B cell (primary cell): ENCODE measurements at regions of chr5 and their contacts with region 1.

Region 1: GRCh38 chr5:54673523-54674225 is 156.1 kb downstream of the SNX18 start:
- DNase-seq: peak; percentile 74
- ATAC-seq: peak; percentile 91
- H3K4me3 ChIP-seq: no peak overlapping the region
- H3K4me3 Mint-ChIP-seq: peak overlapping the region; percentile 43
- H3K27ac ChIP-seq: peak overlapping the region; percentile 26 to 62
- H3K27ac Mint-ChIP-seq: peak overlapping the region; percentile 47
- H3K4me1 ChIP-seq: peaks cover 68 to 76% of the 10 kb centered on the region in 2 donors
- H3K4me1 Mint-ChIP-seq: peaks cover 75% of the 10 kb centered on the region
- H3K27me3 ChIP-seq: no peaks in the 10 kb centered on the region
- H3K27me3 Mint-ChIP-seq: no peaks in the 10 kb centered on the region
- CTCF ChIP-seq: no peak

Region 2: GRCh38 chr5:54646356-54647101 is 27.1 kb before region 1 on chr5:
- CTCF ChIA-PET with region 1: interaction called, 4 read pairs
- POLR2A ChIA-PET with region 1: interaction called, 6 read pairs
- intact Hi-C with region 1: loop called (anchors 1 kb)
- DNase-seq: peak; percentile 88
- ATAC-seq: peak; percentile 89
- H3K4me3 ChIP-seq: peak overlapping the region; percentile 7 to 49 (median 41)
- H3K4me3 Mint-ChIP-seq: peak overlapping the region; percentile 79
- H3K27ac ChIP-seq: peak overlapping the region; percentile 87 to 88
- H3K27ac Mint-ChIP-seq: peak overlapping the region; percentile 98
- H3K4me1 ChIP-seq: peaks cover 61 to 67% of the 10 kb centered on the region in 2 donors
- H3K4me1 Mint-ChIP-seq: peaks cover 68% of the 10 kb centered on the region
- H3K27me3 ChIP-seq: no peaks in the 10 kb centered on the region
- H3K27me3 Mint-ChIP-seq: no peaks in the 10 kb centered on the region
- CTCF ChIP-seq: no peak

Region 3: GRCh38 chr5:54738118-54738972 is 64.7 kb after region 1 on chr5:
- CTCF ChIA-PET with region 1: no interaction called
- POLR2A ChIA-PET with region 1: no interaction called
- intact Hi-C with region 1: no loop called
- DNase-seq: no peak
- ATAC-seq: no peak
- H3K4me3 ChIP-seq: no peak overlapping the region
- H3K4me3 Mint-ChIP-seq: no peak overlapping the region
- H3K27ac ChIP-seq: no peak overlapping the region
- H3K27ac Mint-ChIP-seq: no peak overlapping the region
- H3K4me1 ChIP-seq: peaks cover 7 to 14% of the 10 kb centered on the region in 2 donors
- H3K4me1 Mint-ChIP-seq: peaks cover 21% of the 10 kb centered on the region
- H3K27me3 ChIP-seq: peaks cover 0 to 2% (median 0%) of the 10 kb centered on the region in 4 experiments
- H3K27me3 Mint-ChIP-seq: no peaks in the 10 kb centered on the region
- CTCF ChIP-seq: no peak

Region 4: DNA sequence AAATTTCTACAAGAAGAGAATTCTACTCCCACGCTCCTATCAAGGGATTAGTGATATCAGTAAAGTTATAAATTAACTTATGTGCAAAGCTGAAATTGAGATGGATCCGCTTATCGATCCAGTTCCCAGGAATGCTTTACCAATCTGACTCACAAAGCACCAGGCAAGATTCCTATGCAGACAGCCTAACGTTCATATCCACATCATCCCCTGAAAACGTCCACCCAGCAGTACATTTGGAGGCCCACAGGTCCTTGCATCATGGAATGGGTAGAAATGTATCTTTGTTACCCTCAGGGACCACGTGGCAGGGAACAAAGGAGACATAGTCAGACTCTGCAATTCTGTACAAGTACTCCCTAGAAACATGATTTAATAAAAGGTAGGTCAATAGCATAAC is 164.3 kb after region 1 on chr5:
- CTCF ChIA-PET with region 1: no interaction called
- POLR2A ChIA-PET with region 1: no interaction called
- intact Hi-C with region 1: no loop called
- DNase-seq: no peak
- ATAC-seq: no peak
- H3K4me3 ChIP-seq: no peak overlapping the region
- H3K4me3 Mint-ChIP-seq: no peak overlapping the region
- H3K27ac ChIP-seq: no peak overlapping the region
- H3K27ac Mint-ChIP-seq: no peak overlapping the region
- H3K4me1 ChIP-seq: peaks cover 16 to 20% of the 10 kb centered on the region in 2 donors
- H3K4me1 Mint-ChIP-seq: peaks cover 32% of the 10 kb centered on the region
- H3K27me3 ChIP-seq: no peaks in the 10 kb centered on the region
- H3K27me3 Mint-ChIP-seq: no peaks in the 10 kb centered on the region
- CTCF ChIP-seq: no peak